Thyroid gland (tissue), 4 donors: ENCODE measurements at regions of chr14 and their contacts with region 1.

Region 1: DNA sequence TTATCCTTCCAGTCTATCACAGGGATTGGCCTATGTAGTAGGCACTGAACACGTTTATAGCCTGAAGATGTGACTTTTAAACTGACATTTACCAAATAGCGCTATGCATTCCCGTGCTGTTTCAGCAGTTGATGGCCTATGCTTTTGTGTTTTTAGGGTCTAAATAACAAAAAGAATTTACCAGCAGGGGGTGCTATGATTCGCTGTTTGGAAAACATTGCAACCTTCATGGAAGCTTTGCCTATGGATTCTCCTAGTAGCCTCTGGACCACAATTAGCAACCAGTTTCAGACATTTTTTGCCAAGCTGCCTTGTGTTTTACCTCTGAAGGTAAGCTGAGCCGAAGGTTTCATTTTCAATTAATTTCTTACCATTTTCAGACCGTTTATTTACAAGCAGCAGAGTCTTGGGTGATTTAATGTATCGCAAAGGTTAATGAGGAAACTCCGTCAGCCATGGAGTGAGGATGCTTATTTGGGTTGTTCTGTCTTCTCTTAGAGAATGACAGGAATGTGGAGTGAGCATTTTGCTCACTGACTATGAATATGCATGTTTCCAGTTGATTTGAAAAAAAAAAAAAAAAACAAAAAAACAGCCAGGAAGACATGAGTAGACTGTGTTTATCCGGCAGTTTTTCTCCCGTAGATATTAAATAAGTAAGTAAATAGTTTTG is 133.1 kb downstream of the PRIMA1 start:
- DNase-seq: peak; percentile 6 to 18
- H3K4me3 ChIP-seq: no peak overlapping the region
- H3K27ac ChIP-seq: no peak overlapping the region
- H3K4me1 ChIP-seq: no peaks in the 10 kb centered on the region
- H3K27me3 ChIP-seq: no peaks in the 10 kb centered on the region
- CTCF ChIP-seq: peak; percentile 47 to 74 (median 58)
- POLR2A ChIP-seq: no peak

Region 2: GRCh38 chr14:93788543-93789227 is 133.5 kb after region 1 on chr14:
- intact Hi-C with region 1: loop called (anchors 5 kb)
- DNase-seq: peak; percentile 59 to 62
- H3K4me3 ChIP-seq: peak overlapping the region in 2 of 3 donors; percentile 41 to 54
- H3K27ac ChIP-seq: peak overlapping the region in 1 of 3 donors; percentile 49
- H3K4me1 ChIP-seq: peaks cover 5 to 13% of the 10 kb centered on the region in 2 donors
- H3K27me3 ChIP-seq: no peaks in the 10 kb centered on the region
- CTCF ChIP-seq: peak in 4 of 6 experiments; percentile 15 to 66 (median 40)
- POLR2A ChIP-seq: peak in 1 of 2 donors; percentile 61

Region 3: DNA sequence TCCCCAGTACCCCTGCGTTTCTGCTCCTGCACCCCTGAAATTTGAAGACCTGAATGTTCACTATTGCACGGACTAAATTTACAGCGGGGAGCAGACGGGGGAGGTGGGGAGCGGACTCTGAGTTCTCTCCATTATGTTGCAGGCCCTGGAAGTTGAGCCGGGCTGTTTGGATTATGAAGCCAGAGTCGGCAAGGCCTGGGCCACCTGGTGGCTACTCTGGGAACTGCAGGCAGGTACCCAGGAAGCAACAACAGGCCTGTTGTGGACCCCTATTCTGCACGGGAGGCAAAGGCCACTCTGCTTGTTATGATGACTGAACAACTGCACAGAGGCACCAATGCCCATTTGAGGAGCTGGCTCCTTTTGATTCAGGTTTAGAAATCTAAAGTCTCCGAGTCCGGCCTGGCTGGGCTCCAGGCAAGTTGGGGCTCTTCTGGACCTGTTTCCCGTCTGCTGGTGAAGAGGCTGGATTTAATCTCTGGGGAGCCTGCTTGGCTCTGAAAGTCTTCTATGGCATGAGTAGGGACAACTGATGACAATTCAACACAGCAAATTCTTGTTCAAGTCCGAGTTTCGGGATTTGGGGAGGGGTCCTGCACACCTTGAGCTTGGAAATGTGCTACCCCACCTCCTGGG is 237.8 kb after region 1 on chr14:
- intact Hi-C with region 1: loop called (anchors 2 kb)
- DNase-seq: peak; percentile 75
- H3K4me3 ChIP-seq: no peak overlapping the region
- H3K27ac ChIP-seq: no peak overlapping the region
- H3K4me1 ChIP-seq: no peaks in the 10 kb centered on the region
- H3K27me3 ChIP-seq: no peaks in the 10 kb centered on the region
- CTCF ChIP-seq: peak; percentile 88 to 97 (median 90)
- POLR2A ChIP-seq: no peak

Region 4: GRCh38 chr14:93906341-93907329 is 251.4 kb after region 1 on chr14:
- intact Hi-C with region 1: loop called (anchors 5 kb)
- DNase-seq: peak; percentile 63 to 76
- H3K4me3 ChIP-seq: no peak overlapping the region
- H3K27ac ChIP-seq: no peak overlapping the region
- H3K4me1 ChIP-seq: no peaks in the 10 kb centered on the region
- H3K27me3 ChIP-seq: no peaks in the 10 kb centered on the region
- CTCF ChIP-seq: peak; percentile 27 to 75 (median 50)
- POLR2A ChIP-seq: no peak

Region 5: GRCh38 chr14:94448071-94448808 is 793.0 kb after region 1 on chr14:
- intact Hi-C with region 1: no loop called
- DNase-seq: no peak
- H3K4me3 ChIP-seq: no peak overlapping the region
- H3K27ac ChIP-seq: no peak overlapping the region
- H3K4me1 ChIP-seq: no peaks in the 10 kb centered on the region
- H3K27me3 ChIP-seq: no peaks in the 10 kb centered on the region
- CTCF ChIP-seq: no peak
- POLR2A ChIP-seq: no peak